Tibial artery (tissue), 4 donors: ENCODE measurements at regions of chr1 and their contacts with region 1.

Region 1: GRCh38 chr1:62024690-62025089 is 170.0 kb upstream of the L1TD1 start:
- DNase-seq: no peak
- H3K4me3 ChIP-seq: no peak overlapping the region
- H3K27ac ChIP-seq: no peak overlapping the region
- H3K4me1 ChIP-seq: no peaks in the 10 kb centered on the region
- H3K27me3 ChIP-seq: no peaks in the 10 kb centered on the region
- CTCF ChIP-seq: no peak

Region 2: GRCh38 chr1:61741711-61742619 is 282.7 kb before region 1 on chr1 and contains the start of gene PATJ:
- intact Hi-C with region 1: loop called (anchors 5 kb)
- DNase-seq: peak; percentile 46 to 77
- H3K4me3 ChIP-seq: peak within 1 kb of the TSS; percentile 72 to 92
- H3K27ac ChIP-seq: peak within 1 kb of the TSS; percentile 94 to 99
- H3K4me1 ChIP-seq: peaks cover 0 to 26% (median 10%) of the 10 kb centered on the region in 4 donors
- H3K27me3 ChIP-seq: no peaks in the 10 kb centered on the region
- CTCF ChIP-seq: no peak